Breast epithelium (tissue), 4 donors: ENCODE measurements at regions of chr3 and their contacts with region 1.

Region 1: DNA sequence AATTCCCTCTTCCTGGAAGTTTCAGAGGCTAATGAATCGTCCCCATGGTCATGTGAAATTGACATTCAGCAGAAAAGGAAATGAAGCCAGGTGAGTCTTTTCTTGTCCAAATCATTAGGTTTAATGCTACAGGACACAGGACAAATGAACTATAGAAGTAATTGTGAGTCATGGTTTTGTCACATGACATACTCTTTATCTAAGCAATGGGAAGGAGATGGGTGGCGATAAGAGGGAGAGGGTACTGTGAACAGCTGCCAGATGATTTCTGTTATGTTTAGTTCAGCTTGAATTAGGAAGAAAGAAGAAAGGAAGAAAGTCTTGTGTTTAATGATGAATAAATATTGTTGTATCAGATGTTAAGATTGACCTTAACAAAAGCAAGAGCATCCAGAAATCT is 515.4 kb upstream of the ZNF717 start:
- DNase-seq: no peak
- H3K4me3 ChIP-seq: no peak overlapping the region
- H3K27ac ChIP-seq: no peak overlapping the region
- H3K4me1 ChIP-seq: no peaks in the 10 kb centered on the region
- H3K27me3 ChIP-seq: no peaks in the 10 kb centered on the region
- CTCF ChIP-seq: no peak
- POLR2A ChIP-seq: no peak

Region 2: GRCh38 chr3:75906555-75907112 is 394.1 kb before region 1 on chr3:
- intact Hi-C with region 1: no loop called
- DNase-seq: peak in 1 of 2 donors; percentile 48
- H3K4me3 ChIP-seq: peak overlapping the region; percentile 20 to 59 (median 42)
- H3K27ac ChIP-seq: no peak overlapping the region
- H3K4me1 ChIP-seq: no peaks in the 10 kb centered on the region
- H3K27me3 ChIP-seq: no peaks in the 10 kb centered on the region
- CTCF ChIP-seq: no peak
- POLR2A ChIP-seq: no peak

Region 3: DNA sequence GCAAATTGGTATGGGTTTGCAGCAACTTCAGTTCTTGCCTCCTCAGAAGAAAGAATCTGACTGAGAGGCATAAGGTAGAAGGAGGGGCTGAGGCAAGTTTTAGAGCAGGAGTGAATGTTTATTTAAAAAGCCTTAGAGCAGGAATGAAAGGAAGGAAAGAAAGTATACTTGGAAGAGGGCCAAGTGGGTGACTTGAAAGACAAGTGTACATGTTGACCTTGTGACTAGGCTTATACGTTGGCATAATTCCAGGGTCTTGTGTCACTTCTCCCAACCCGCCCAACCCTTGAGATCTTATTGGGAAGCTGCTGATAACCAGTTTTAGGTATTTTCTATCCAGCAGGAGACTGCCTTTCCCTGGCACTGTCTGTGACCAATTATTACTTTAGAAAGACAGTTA is 78.5 kb before region 1 on chr3:
- intact Hi-C with region 1: loop called (anchors 5 kb)
- DNase-seq: no peak
- H3K4me3 ChIP-seq: no peak overlapping the region
- H3K27ac ChIP-seq: no peak overlapping the region
- H3K4me1 ChIP-seq: no peaks in the 10 kb centered on the region
- H3K27me3 ChIP-seq: no peaks in the 10 kb centered on the region
- CTCF ChIP-seq: no peak
- POLR2A ChIP-seq: no peak

Region 4: GRCh38 chr3:76479161-76479650 is 178.5 kb after region 1 on chr3:
- intact Hi-C with region 1: loop called (anchors 5 kb)
- DNase-seq: no peak
- H3K4me3 ChIP-seq: no peak overlapping the region
- H3K27ac ChIP-seq: no peak overlapping the region
- H3K4me1 ChIP-seq: no peaks in the 10 kb centered on the region
- H3K27me3 ChIP-seq: no peaks in the 10 kb centered on the region
- CTCF ChIP-seq: no peak
- POLR2A ChIP-seq: no peak